AG04449 (cell line): ENCODE measurements at regions of chr15 and their contacts with region 1.

Region 1: GRCh38 chr15:98442379-98442833 is 205.9 kb upstream of the IGF1R start:
- DNase-seq: peak; percentile 34
- H3K4me3 ChIP-seq: no peak overlapping the region
- CTCF ChIP-seq: peak; percentile 84

Region 2: DNA sequence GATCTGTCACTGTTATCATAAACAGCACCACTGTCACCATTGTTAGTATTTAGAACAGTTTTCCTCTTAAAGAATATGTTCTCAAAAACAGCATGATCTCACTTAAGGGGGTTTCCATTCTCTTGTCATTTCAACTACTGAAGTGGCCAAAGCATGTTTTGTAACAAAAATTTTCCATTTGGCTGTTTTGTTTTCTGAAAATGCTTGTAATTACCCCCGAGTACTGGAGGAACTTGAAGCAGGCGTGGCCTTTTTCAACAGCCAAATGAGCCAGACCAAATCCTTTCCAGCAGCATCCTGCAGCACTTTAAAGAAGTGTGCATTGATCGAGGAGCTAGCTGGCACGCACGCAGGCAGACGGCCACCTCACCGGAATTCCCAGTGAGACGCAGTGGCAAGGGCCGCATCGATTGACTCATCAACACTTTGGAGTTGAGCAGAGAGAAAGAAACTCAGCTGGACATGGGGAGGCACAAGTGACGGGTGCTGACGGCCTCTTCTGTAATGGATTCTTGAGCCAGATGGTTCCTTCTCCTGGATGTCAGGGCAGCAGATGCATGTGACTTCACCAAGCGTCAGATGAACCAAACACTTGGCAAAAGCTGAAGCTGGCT is 28.4 kb before region 1 on chr15:
- CTCF ChIA-PET with region 1: no interaction called
- POLR2A ChIA-PET with region 1: no interaction called
- DNase-seq: no peak
- H3K4me3 ChIP-seq: no peak overlapping the region
- CTCF ChIP-seq: no peak

Region 3: DNA sequence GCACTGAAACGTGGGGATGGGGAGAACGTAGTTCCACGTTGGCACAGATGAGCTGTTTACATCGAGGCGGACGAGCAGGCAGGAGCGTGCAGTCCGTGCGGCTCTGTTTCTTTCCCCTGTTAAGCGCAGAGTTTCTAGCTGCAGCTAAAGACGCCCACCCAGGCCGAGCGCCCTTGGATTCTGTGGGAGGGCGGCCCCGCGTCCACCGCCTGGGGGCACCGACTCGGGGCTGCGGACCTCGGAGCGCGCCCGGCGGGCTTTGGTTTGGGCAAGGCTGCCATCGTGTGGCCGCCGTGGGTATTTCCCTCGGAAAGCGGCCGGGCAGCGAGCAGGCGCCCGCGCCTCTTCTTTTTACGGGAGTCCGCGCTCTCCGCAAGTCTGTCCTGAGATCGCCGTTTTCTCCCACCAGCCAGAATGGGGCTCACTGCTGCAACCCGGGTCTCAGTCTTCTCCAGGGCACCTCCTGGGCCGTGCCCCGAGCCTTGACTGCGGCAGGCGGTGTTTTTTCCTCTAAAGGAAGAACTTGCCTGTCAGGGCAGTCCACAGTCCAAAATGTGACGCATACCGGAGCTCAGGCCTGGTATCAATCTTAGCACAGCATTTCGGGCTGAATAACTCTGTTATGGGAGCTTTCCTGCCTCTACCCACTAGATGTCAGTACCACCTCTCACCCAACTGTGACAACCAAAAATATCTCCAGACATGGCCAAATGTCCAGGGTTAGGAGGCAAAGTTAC is 14.0 kb before region 1 on chr15:
- CTCF ChIA-PET with region 1: interaction called, 33 read pairs
- POLR2A ChIA-PET with region 1: no interaction called
- DNase-seq: no peak
- H3K4me3 ChIP-seq: peak overlapping the region; percentile 56
- CTCF ChIP-seq: peak; percentile 90

Region 4: GRCh38 chr15:98455965-98456364 is 13.6 kb after region 1 on chr15:
- CTCF ChIA-PET with region 1: interaction called, 19 read pairs
- POLR2A ChIA-PET with region 1: no interaction called
- DNase-seq: no peak
- H3K4me3 ChIP-seq: no peak overlapping the region
- CTCF ChIP-seq: no peak

Region 5: DNA sequence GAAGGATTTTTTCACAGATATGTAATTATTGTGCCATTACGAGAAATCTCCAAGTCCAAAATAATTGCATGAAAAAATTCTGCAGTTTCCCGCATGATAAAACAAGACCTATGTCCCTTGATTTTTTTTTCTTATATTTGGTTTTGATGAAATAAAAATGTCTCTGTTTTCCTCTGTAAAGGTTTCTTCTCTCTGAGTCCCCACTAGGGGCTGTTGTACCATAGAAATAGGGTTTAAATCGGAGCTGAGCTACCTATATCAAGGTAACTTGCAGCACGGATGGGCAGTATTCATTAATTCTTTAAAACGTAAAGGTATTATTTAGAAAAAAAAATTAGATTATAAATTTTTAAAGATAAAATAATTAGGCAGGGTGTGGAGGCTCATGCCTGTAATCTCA is 139.3 kb after region 1 on chr15:
- CTCF ChIA-PET with region 1: no interaction called
- POLR2A ChIA-PET with region 1: no interaction called
- DNase-seq: no peak
- H3K4me3 ChIP-seq: no peak overlapping the region
- CTCF ChIP-seq: no peak